ENCODE measurements at regions of chr21 and their contacts with region 1.

Region 1: GRCh38 chr21:34933609-34934335 is 115.3 kb downstream of the RUNX1 start:
- DNase-seq: peak in 7 of 14 experiments; percentile 10 to 89 (median 35)
- ATAC-seq: peak; percentile 86
- H3K4me3 ChIP-seq: peak overlapping the region; percentile 39
- H3K4me3 Mint-ChIP-seq: peak overlapping the region; percentile 86
- H3K27ac ChIP-seq: peak overlapping the region; percentile 75 to 84
- H3K27ac Mint-ChIP-seq: peak overlapping the region; percentile 99
- H3K4me1 ChIP-seq: peaks cover 47% of the 10 kb centered on the region
- H3K4me1 Mint-ChIP-seq: peaks cover 92% of the 10 kb centered on the region
- H3K27me3 ChIP-seq: no peaks in the 10 kb centered on the region
- H3K27me3 Mint-ChIP-seq: no peaks in the 10 kb centered on the region
- CTCF ChIP-seq: no peak

Region 2: DNA sequence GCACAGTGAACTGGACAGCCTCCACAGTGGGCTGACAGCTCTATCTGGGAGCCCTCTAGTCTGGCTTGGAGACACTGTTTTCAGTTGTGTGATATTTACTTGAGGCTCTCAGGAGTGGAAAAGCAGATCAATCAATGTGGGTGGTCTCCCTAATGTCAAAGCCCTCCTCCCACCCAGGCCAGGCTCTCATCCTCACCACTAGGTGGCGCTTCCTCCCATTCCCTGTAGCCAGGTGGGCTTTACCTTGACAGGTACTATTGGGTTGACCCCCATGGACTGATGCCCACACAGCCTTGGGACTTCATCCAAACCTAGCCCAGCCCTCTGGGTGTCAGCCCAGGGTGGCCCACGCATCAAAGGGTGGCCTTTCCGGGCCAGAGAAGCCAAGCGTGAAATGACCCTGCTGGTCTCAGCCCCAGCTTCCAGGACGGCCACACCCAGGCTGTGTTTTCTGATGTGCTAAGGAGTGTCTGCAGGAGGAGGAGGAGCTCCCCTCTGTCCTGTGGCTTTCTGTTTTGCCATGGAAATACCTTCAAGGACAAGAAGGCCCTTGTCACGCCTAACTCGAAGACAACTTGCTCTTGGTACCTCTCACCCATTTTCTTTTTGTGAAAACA is 211.0 kb before region 1 on chr21:
- CTCF ChIA-PET with region 1: no interaction called
- POLR2A ChIA-PET with region 1: no interaction called
- intact Hi-C with region 1: no loop called
- DNase-seq: peak in 8 of 14 experiments; percentile 12 to 57 (median 15)
- ATAC-seq: no peak
- H3K4me3 ChIP-seq: no peak overlapping the region
- H3K4me3 Mint-ChIP-seq: no peak overlapping the region
- H3K27ac ChIP-seq: no peak overlapping the region
- H3K27ac Mint-ChIP-seq: no peak overlapping the region
- H3K4me1 ChIP-seq: no peaks in the 10 kb centered on the region
- H3K4me1 Mint-ChIP-seq: no peaks in the 10 kb centered on the region
- H3K27me3 ChIP-seq: peaks cover 0 to 2% of the 10 kb centered on the region in 2 experiments
- H3K27me3 Mint-ChIP-seq: peaks cover 10% of the 10 kb centered on the region
- CTCF ChIP-seq: peak; percentile 72

Region 3: GRCh38 chr21:34946916-34947534 is 13.3 kb after region 1 on chr21:
- CTCF ChIA-PET with region 1: interaction called, 9 read pairs
- POLR2A ChIA-PET with region 1: interaction called, 15 read pairs
- intact Hi-C with region 1: loop called in 1 of 2 experiments (anchors 2 kb)
- DNase-seq: no peak
- ATAC-seq: peak; percentile 24
- H3K4me3 ChIP-seq: no peak overlapping the region
- H3K4me3 Mint-ChIP-seq: no peak overlapping the region
- H3K27ac ChIP-seq: no peak overlapping the region
- H3K27ac Mint-ChIP-seq: peak overlapping the region; percentile 55
- H3K4me1 ChIP-seq: peaks cover 55% of the 10 kb centered on the region
- H3K4me1 Mint-ChIP-seq: peaks cover 79% of the 10 kb centered on the region
- H3K27me3 ChIP-seq: no peaks in the 10 kb centered on the region
- H3K27me3 Mint-ChIP-seq: no peaks in the 10 kb centered on the region
- CTCF ChIP-seq: no peak

Region 4: GRCh38 chr21:34952701-34953100 is 18.9 kb after region 1 on chr21:
- CTCF ChIA-PET with region 1: interaction called, 8 read pairs
- POLR2A ChIA-PET with region 1: interaction called, 20 read pairs
- intact Hi-C with region 1: loop called in 1 of 2 experiments (anchors 2 kb)
- DNase-seq: peak in 1 of 14 experiments; percentile 32
- ATAC-seq: peak; percentile 44
- H3K4me3 ChIP-seq: no peak overlapping the region
- H3K4me3 Mint-ChIP-seq: peak overlapping the region; percentile 55
- H3K27ac ChIP-seq: no peak overlapping the region
- H3K27ac Mint-ChIP-seq: peak overlapping the region; percentile 80
- H3K4me1 ChIP-seq: peaks cover 51% of the 10 kb centered on the region
- H3K4me1 Mint-ChIP-seq: peaks cover 78% of the 10 kb centered on the region
- H3K27me3 ChIP-seq: no peaks in the 10 kb centered on the region
- H3K27me3 Mint-ChIP-seq: no peaks in the 10 kb centered on the region
- CTCF ChIP-seq: no peak

Region 5: DNA sequence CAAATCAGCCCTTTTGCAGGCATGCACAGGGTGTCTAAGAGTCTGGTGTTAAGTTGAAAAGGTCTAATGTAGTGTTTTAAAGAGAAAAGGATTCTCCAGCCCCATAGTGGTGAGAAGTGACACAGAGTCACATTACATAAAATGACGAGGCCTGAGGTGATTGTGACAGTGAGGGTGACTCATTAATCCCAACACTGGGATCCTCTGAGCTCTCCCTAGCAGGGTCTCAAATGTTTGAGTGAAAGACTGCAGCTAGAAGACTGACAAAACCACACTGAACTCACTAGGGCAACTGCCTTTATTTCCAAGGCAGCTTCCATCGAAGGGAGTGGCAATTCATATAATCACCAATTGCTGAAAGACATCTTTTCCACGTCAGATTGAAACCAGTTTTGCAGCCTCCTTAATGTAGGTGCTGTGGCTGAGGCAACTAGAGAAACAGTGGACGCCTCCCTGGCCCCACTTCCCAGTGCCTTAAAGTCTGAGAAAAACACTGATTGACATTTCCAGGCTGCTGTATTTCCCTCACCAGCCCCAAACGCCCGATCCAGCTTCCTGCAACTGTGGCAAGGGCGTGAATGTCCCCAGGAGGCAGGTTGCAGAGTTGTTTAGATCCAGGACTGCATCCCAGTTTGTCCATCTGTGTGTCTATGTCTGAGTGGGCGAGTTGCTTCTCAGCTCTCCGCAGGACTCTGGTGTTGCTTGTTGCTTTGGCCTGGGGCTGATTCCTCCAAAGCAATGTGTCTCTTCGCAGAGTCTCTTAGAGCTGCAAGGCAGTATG is 33.9 kb after region 1 on chr21:
- CTCF ChIA-PET with region 1: interaction called, 6 read pairs
- POLR2A ChIA-PET with region 1: interaction called, 12 read pairs
- intact Hi-C with region 1: loop called in 1 of 2 experiments (anchors 5 kb)
- DNase-seq: peak in 3 of 14 experiments; percentile 25 to 60 (median 50)
- ATAC-seq: peak; percentile 43
- H3K4me3 ChIP-seq: no peak overlapping the region
- H3K4me3 Mint-ChIP-seq: peak overlapping the region; percentile 64
- H3K27ac ChIP-seq: peak overlapping the region in 1 of 2 donors; percentile 7
- H3K27ac Mint-ChIP-seq: peak overlapping the region; percentile 86
- H3K4me1 ChIP-seq: peaks cover 82% of the 10 kb centered on the region
- H3K4me1 Mint-ChIP-seq: peaks cover 95% of the 10 kb centered on the region
- H3K27me3 ChIP-seq: no peaks in the 10 kb centered on the region
- H3K27me3 Mint-ChIP-seq: no peaks in the 10 kb centered on the region
- CTCF ChIP-seq: no peak

Region 6: GRCh38 chr21:34974162-34974981 is 40.6 kb after region 1 on chr21:
- CTCF ChIA-PET with region 1: interaction called, 3 read pairs
- POLR2A ChIA-PET with region 1: interaction called, 31 read pairs
- intact Hi-C with region 1: loop called (anchors 2 to 5 kb)
- DNase-seq: peak in 11 of 14 experiments; percentile 18 to 87 (median 38)
- ATAC-seq: peak; percentile 85
- H3K4me3 ChIP-seq: peak overlapping the region; percentile 25
- H3K4me3 Mint-ChIP-seq: peak overlapping the region; percentile 88
- H3K27ac ChIP-seq: peak overlapping the region; percentile 29 to 36
- H3K27ac Mint-ChIP-seq: peak overlapping the region; percentile 92
- H3K4me1 ChIP-seq: peaks cover 47% of the 10 kb centered on the region
- H3K4me1 Mint-ChIP-seq: peaks cover 93% of the 10 kb centered on the region
- H3K27me3 ChIP-seq: no peaks in the 10 kb centered on the region
- H3K27me3 Mint-ChIP-seq: no peaks in the 10 kb centered on the region
- CTCF ChIP-seq: no peak

Region 7: DNA sequence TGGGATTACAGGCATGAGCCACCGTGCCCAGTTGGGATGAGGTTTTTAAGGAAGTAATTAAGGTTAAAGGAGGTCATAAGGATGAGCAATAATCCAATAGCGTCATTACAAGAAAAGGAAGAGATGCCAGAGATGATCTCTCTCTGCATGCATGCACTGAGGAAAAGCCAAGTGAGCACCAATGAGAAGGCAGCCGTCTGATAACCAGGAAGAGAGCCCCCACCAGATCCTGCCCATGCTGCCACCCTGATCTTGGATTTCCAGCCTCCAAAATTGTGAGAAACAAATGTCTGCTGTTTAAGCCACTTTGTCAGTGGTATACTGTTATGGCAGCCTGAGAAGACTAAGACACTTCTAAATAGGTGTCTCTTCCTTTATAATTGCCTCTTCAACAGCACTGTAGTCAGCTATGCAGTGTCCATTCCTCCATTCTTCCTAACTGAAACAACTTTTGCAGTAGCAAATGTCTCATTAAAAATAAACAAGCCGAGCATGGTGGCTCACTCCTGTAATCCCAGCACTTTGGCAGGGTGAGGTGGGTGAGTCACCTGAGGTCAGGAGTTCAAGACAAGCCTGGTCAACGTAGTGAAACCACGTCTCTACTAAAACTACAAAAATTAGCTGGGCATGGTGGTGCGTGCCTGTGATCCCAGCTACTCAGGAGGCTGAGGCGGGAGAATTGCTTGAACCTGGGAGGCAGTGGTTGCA is 331.6 kb after region 1 on chr21:
- CTCF ChIA-PET with region 1: no interaction called
- POLR2A ChIA-PET with region 1: no interaction called
- intact Hi-C with region 1: no loop called
- DNase-seq: no peak
- ATAC-seq: no peak
- H3K4me3 ChIP-seq: no peak overlapping the region
- H3K4me3 Mint-ChIP-seq: no peak overlapping the region
- H3K27ac ChIP-seq: no peak overlapping the region
- H3K27ac Mint-ChIP-seq: no peak overlapping the region
- H3K4me1 ChIP-seq: no peaks in the 10 kb centered on the region
- H3K4me1 Mint-ChIP-seq: no peaks in the 10 kb centered on the region
- H3K27me3 ChIP-seq: no peaks in the 10 kb centered on the region
- H3K27me3 Mint-ChIP-seq: no peaks in the 10 kb centered on the region
- CTCF ChIP-seq: no peak

Measured in CD4-positive, alpha-beta T cell (primary cell).